ENCODE measurements at regions of chr9 and their contacts with region 1.

Region 1: GRCh38 chr9:893843-894420 is 52.4 kb downstream of the DMRT1 start:
- DNase-seq: peak; percentile 85
- ATAC-seq: peak; percentile 99
- H3K4me3 Mint-ChIP-seq: no peak overlapping the region
- H3K27ac Mint-ChIP-seq: no peak overlapping the region
- H3K4me1 Mint-ChIP-seq: peaks cover 18% of the 10 kb centered on the region
- H3K27me3 Mint-ChIP-seq: peaks cover 23% of the 10 kb centered on the region
- CTCF ChIP-seq: peak; percentile 87

Region 2: GRCh38 chr9:866188-866587 is 27.7 kb before region 1 on chr9:
- CTCF ChIA-PET with region 1: no interaction called
- POLR2A ChIA-PET with region 1: no interaction called
- intact Hi-C with region 1: no loop called
- DNase-seq: no peak
- ATAC-seq: no peak
- H3K4me3 Mint-ChIP-seq: no peak overlapping the region
- H3K27ac Mint-ChIP-seq: no peak overlapping the region
- H3K4me1 Mint-ChIP-seq: no peaks in the 10 kb centered on the region
- H3K27me3 Mint-ChIP-seq: peaks cover 8% of the 10 kb centered on the region
- CTCF ChIP-seq: no peak

Region 3: DNA sequence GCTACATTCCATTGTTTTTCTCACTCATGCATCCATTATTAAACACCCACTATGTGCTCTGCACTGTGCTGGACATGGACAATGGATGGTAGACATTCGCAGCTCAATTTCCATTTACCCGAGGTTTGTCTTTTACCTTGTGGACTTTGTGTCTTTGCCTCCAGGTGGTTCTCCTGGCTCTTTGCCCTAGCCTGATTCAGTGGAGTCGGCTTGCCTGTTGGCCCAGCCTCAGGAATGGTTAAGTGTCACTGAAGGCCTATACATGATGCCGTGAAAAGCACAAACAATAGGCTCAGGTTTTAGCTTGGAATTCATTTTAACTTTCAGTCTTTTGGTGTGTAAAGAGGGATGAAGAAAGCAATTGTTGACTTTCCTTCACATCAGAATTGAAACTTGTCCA is 66.0 kb after region 1 on chr9:
- CTCF ChIA-PET with region 1: interaction called, 3 read pairs
- POLR2A ChIA-PET with region 1: no interaction called
- intact Hi-C with region 1: loop called (anchors 10 kb)
- DNase-seq: no peak
- ATAC-seq: no peak
- H3K4me3 Mint-ChIP-seq: no peak overlapping the region
- H3K27ac Mint-ChIP-seq: no peak overlapping the region
- H3K4me1 Mint-ChIP-seq: no peaks in the 10 kb centered on the region
- H3K27me3 Mint-ChIP-seq: peaks cover 31% of the 10 kb centered on the region
- CTCF ChIP-seq: no peak

Region 4: DNA sequence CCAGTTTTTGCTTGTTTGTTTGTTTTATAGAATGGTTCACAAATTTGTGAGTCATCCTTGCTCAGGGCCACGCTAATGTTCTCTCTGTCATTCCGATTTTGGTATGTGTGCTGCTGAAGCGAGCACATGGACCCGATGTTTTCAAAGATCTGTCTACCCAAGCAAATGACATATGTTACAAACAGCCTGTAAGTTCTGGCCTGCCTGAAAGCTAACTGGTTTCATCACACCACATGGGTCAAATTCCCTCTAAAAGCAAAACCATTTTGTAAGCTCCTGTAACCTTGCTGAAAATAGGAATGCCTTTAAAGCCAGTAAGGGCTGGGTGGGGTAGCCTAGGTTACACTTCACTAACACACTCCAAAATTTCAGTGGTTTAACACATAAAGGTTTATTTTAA is 107.9 kb after region 1 on chr9:
- CTCF ChIA-PET with region 1: interaction called, 24 read pairs
- POLR2A ChIA-PET with region 1: no interaction called
- intact Hi-C with region 1: loop called (anchors 5 kb)
- DNase-seq: no peak
- ATAC-seq: no peak
- H3K4me3 Mint-ChIP-seq: no peak overlapping the region
- H3K27ac Mint-ChIP-seq: no peak overlapping the region
- H3K4me1 Mint-ChIP-seq: peaks cover 3% of the 10 kb centered on the region
- H3K27me3 Mint-ChIP-seq: peaks cover 14% of the 10 kb centered on the region
- CTCF ChIP-seq: no peak

Region 5: GRCh38 chr9:1009101-1009707 is 115.3 kb after region 1 on chr9:
- CTCF ChIA-PET with region 1: interaction called, 41 read pairs
- POLR2A ChIA-PET with region 1: no interaction called
- intact Hi-C with region 1: loop called (anchors 5 kb)
- DNase-seq: peak; percentile 82
- ATAC-seq: peak; percentile 99
- H3K4me3 Mint-ChIP-seq: no peak overlapping the region
- H3K27ac Mint-ChIP-seq: no peak overlapping the region
- H3K4me1 Mint-ChIP-seq: peaks cover 3% of the 10 kb centered on the region
- H3K27me3 Mint-ChIP-seq: peaks cover 34% of the 10 kb centered on the region
- CTCF ChIP-seq: peak; percentile 89